Right ventricle myocardium inferior (tissue), 1 donor: ENCODE measurements at regions of chr1 and their contacts with region 1.

Region 1: DNA sequence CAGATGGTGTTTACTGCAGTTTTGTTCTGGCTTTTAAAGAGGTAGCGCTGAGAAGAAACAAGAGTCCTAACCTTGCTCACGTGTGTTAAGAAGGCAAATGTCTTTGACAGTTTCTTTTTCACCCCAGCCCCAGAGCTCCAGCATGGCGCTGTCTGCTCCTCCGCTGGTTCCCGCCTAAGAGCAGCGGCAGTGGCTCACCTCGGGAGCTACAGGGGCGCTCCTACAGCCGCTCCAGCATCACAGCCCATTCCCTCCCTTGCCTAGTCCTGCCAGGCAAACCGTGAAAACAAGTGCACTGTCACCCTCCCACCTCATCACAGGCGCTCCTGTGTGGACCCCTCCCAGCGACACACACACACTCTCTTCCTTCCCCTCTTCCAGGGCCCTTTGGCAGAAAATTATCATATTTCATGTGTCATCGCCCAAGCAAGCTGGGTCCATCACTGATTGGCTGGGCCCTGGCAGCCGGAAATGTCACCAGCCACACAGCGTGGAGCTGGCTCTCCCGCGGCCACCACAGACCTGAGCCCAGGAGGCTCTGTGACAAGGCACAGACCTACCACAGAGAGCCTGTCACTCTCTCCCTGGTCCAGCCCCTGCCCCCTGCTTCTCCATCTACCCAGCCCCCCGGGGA is 1.2 kb upstream of the HIVEP3 start:
- DNase-seq: no peak
- ATAC-seq: peak; percentile 79

Region 2: DNA sequence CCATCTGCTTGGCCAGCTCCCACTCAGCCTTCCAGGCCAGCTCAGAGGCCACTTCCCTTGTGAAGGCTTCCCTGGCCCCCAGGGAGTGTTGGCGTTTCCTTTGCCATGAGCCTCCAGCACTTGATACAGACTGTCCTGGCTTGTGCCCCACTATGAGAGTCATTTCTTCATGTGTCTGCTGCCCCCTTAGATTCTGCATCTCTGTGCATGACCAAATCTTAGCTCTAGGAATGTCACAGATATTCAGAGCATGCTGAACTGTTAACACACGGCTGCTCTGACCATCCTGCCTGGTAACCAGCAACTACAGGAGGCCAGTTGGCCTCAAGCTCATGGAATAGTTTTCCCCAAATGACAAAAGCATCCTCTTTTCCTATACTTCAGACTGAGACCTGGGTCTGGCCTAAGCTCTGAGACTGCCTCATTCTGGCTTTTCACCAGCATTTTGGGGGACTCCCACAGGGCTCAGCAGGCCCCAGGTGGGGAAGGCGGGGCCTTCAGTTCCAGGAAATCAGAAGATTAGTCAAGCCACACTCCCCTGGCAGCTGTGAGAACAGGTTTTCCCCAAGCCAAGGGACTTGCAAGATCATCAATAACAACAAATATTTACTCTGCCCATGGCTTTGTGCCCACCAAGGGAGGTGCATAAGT is 252.8 kb before region 1 on chr1:
- intact Hi-C with region 1: no loop called
- DNase-seq: no peak
- ATAC-seq: no peak

Region 3: GRCh38 chr1:41812051-41812450 is 107.8 kb before region 1 on chr1:
- intact Hi-C with region 1: loop called (anchors 5 kb)
- DNase-seq: no peak
- ATAC-seq: no peak

Region 4: GRCh38 chr1:41876576-41877445 is 43.1 kb before region 1 on chr1:
- intact Hi-C with region 1: loop called (anchors 5 kb)
- DNase-seq: no peak
- ATAC-seq: no peak

Region 5: DNA sequence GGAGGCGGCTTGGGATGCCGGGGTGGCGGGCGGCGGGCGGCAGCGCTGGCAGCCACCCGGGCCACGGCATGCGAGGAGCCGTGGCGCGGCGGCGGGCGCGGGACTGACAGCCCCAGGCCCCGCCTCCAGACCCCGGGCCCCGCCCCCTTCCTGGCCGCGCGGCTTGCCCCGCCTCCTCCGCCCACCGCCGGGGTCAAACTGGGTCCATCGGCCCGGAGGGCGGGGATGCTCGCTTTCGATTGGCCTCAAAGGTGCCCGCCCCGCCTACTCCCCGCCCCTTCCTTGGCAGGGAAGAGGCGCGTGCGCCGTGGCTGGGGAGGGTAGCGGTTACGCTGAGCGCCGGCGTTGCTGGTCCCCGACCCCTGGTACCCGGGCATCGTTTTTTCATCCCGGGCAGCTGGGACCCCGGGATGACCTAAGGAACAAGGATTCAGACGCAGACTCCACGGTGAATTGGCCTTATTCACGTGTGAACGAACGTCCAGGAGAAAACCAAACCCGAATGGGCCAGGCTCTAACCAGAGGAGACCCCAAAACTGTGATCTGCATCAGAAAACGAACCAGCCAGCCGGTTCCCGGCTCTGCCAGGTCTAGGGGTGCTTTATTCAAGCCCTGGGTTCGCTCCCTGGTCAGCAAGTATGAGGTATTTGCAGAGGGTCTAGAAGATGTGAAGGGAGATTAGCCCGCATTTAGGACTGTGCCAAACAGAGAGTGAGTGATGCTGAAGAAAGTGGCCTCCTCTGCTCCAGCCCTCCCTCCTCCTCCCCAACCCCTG is 116.1 kb after region 1 on chr1:
- intact Hi-C with region 1: loop called (anchors 5 kb)
- DNase-seq: peak; percentile 98
- ATAC-seq: peak; percentile 97